ENCODE measurements at regions of chr4 and their contacts with region 1.

Region 1: GRCh38 chr4:6264225-6264540 is 5.5 kb upstream of the WFS1 start:
- DNase-seq: peak; percentile 69
- H3K4me3 ChIP-seq: no peak overlapping the region
- H3K27ac ChIP-seq: no peak overlapping the region
- H3K4me1 ChIP-seq: no peaks in the 10 kb centered on the region
- H3K27me3 ChIP-seq: peaks cover 11 to 13% of the 10 kb centered on the region in 2 experiments
- CTCF ChIP-seq: peak; percentile 50 to 78
- POLR2A ChIP-seq: no peak

Region 2: GRCh38 chr4:6278801-6279197 is 14.6 kb after region 1 on chr4:
- CTCF ChIA-PET with region 1: interaction called, 18 read pairs
- POLR2A ChIA-PET with region 1: interaction called, 6 read pairs
- dilution Hi-C with region 1: no loop called
- intact Hi-C with region 1: loop called (anchors 1 kb)
- DNase-seq: peak; percentile 96
- H3K4me3 ChIP-seq: no peak overlapping the region
- H3K27ac ChIP-seq: peak overlapping the region; percentile 64
- H3K4me1 ChIP-seq: peaks cover 23% of the 10 kb centered on the region
- H3K27me3 ChIP-seq: no peaks in the 10 kb centered on the region
- CTCF ChIP-seq: no peak
- POLR2A ChIP-seq: peak; percentile 76

Region 3: GRCh38 chr4:6291784-6292297 is 27.7 kb after region 1 on chr4:
- CTCF ChIA-PET with region 1: no interaction called
- POLR2A ChIA-PET with region 1: no interaction called
- dilution Hi-C with region 1: no loop called
- intact Hi-C with region 1: no loop called
- DNase-seq: no peak
- H3K4me3 ChIP-seq: no peak overlapping the region
- H3K27ac ChIP-seq: no peak overlapping the region
- H3K4me1 ChIP-seq: no peaks in the 10 kb centered on the region
- H3K27me3 ChIP-seq: no peaks in the 10 kb centered on the region
- CTCF ChIP-seq: no peak
- POLR2A ChIP-seq: no peak

Region 4: GRCh38 chr4:6319530-6320150 is 55.5 kb after region 1 on chr4:
- CTCF ChIA-PET with region 1: interaction called, 623 read pairs
- POLR2A ChIA-PET with region 1: no interaction called
- dilution Hi-C with region 1: no loop called
- intact Hi-C with region 1: no loop called
- DNase-seq: no peak
- H3K4me3 ChIP-seq: no peak overlapping the region
- H3K27ac ChIP-seq: no peak overlapping the region
- H3K4me1 ChIP-seq: peaks cover 3% of the 10 kb centered on the region
- H3K27me3 ChIP-seq: no peaks in the 10 kb centered on the region
- CTCF ChIP-seq: no peak
- POLR2A ChIP-seq: no peak

Region 5: DNA sequence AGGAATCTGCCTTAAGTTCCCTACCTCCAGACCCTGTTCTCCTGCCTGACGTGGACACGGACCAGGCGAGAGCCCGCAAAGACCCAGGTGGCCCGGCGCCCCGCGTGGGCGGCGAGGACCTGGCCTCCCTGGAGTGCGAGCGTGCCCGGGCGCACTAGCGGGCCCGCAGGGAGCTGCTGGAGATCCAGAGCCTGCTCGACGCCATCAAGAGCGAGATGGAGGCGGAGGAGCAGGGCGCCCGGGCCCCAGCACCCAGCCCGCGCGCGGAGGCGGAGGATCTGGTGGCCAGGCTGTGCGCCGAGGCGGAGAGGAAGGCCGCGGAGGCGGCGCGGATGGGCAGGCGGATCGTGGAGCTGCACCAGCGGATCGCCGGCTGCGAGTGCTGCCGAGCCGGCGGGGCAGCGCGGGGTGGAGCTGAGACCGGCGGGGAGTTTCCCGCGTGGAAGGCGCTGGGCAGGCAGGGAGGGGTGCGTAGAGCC is 394.5 kb after region 1 on chr4:
- CTCF ChIA-PET with region 1: no interaction called
- POLR2A ChIA-PET with region 1: no interaction called
- dilution Hi-C with region 1: no loop called
- intact Hi-C with region 1: no loop called
- DNase-seq: peak; percentile 31
- H3K4me3 ChIP-seq: peak overlapping the region; percentile 7 to 52 (median 34)
- H3K27ac ChIP-seq: no peak overlapping the region
- H3K4me1 ChIP-seq: peaks cover 2% of the 10 kb centered on the region
- H3K27me3 ChIP-seq: peaks cover 17 to 39% of the 10 kb centered on the region in 2 experiments
- CTCF ChIP-seq: no peak
- POLR2A ChIP-seq: no peak

Measured in endothelial cell of umbilical vein (primary cell).